ENCODE measurements at regions of chr6 and their contacts with region 1.

Region 1: DNA sequence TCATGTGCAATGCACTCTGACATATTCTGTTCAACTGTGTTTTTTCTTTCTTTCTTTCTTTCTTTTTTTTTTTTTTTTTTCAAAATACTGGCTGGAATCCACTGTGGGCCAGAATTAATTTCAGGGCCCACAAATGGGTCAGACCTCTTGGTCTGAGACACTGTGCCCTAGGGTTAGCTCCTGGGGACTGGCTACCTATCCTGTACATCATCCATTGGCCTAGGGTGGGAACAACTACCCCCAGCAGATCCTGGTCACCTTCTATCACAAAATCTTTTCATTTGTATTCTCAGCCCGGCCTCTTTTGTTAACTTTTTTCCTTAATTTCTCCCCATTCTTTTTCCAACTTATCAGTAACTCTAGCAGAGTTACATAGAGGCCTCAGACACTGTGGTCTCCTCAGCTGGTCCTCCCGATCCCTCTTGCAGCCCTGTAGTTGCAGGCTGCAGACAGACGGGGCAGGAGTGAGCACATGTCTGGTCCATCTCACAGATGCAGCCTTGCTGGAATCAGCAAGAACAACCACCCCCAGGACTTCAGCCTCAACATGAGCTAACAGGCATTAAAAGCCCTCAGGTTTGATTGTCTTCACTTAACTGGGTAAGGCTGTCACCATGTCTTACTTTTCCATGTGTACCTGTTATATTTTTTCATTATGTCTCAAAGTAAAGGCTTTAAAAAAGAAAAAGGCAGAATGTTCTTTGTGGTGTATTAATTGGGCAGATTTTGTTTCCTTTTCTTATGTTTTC is 41.3 kb downstream of the TXLNB start:
- DNase-seq: peak; percentile 61 to 71
- H3K4me3 ChIP-seq: no peak overlapping the region
- H3K4me3 Mint-ChIP-seq: no peak overlapping the region
- H3K27ac Mint-ChIP-seq: no peak overlapping the region
- H3K4me1 ChIP-seq: no peaks in the 10 kb centered on the region
- H3K4me1 Mint-ChIP-seq: no peaks in the 10 kb centered on the region
- H3K27me3 ChIP-seq: no peaks in the 10 kb centered on the region
- H3K27me3 Mint-ChIP-seq: no peaks in the 10 kb centered on the region
- CTCF ChIP-seq: peak; percentile 59 to 74

Region 2: GRCh38 chr6:139275279-139276055 is 25.0 kb after region 1 on chr6:
- CTCF ChIA-PET with region 1: no interaction called
- POLR2A ChIA-PET with region 1: no interaction called
- intact Hi-C with region 1: loop called (anchors 2 kb)
- DNase-seq: no peak
- H3K4me3 ChIP-seq: no peak overlapping the region
- H3K4me3 Mint-ChIP-seq: no peak overlapping the region
- H3K27ac Mint-ChIP-seq: no peak overlapping the region
- H3K4me1 ChIP-seq: peaks cover 18% of the 10 kb centered on the region
- H3K4me1 Mint-ChIP-seq: peaks cover 9% of the 10 kb centered on the region
- H3K27me3 ChIP-seq: no peaks in the 10 kb centered on the region
- H3K27me3 Mint-ChIP-seq: no peaks in the 10 kb centered on the region
- CTCF ChIP-seq: no peak

Region 3: DNA sequence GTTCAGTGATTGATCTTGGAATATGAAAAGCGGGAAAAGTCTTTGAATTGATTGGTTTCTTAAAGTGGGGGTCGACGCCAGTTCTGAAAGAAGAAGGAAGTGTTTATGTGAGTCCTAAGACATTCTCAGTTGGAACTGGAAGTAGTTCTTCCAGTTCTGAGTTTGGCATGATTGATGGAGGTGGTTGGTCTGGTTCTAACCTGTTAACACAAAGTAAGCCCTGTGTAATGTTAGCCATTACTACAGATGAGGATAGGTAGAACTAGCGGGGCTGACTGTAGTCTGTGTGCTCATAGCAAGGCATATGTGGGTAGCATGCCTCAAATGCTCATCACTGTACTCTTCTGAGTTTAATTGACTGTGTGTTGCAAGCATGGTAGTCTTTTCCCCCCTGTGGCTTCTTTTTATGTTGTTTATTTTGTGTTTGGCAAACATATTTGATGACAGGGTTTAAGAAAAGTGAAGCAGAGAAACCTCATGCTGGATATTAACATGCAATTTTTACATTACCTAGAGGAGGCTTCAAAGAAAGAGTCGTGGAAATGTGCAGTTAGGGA is 99.1 kb after region 1 on chr6:
- CTCF ChIA-PET with region 1: no interaction called
- POLR2A ChIA-PET with region 1: no interaction called
- intact Hi-C with region 1: loop called (anchors 5 kb)
- DNase-seq: no peak
- H3K4me3 ChIP-seq: no peak overlapping the region
- H3K4me3 Mint-ChIP-seq: no peak overlapping the region
- H3K27ac Mint-ChIP-seq: peak overlapping the region; percentile 30
- H3K4me1 ChIP-seq: no peaks in the 10 kb centered on the region
- H3K4me1 Mint-ChIP-seq: peaks cover 11% of the 10 kb centered on the region
- H3K27me3 ChIP-seq: no peaks in the 10 kb centered on the region
- H3K27me3 Mint-ChIP-seq: no peaks in the 10 kb centered on the region
- CTCF ChIP-seq: no peak

Measured in Caco-2 (cell line).